AG04449 (cell line): ENCODE measurements at regions of chr19 and their contacts with region 1.

Region 1: GRCh38 chr19:262125-262524 is 29.1 kb downstream of the PLPP2 start:
- DNase-seq: no peak
- H3K4me3 ChIP-seq: no peak overlapping the region
- CTCF ChIP-seq: no peak

Region 2: GRCh38 chr19:277581-278165 is 15.5 kb after region 1 on chr19:
- CTCF ChIA-PET with region 1: interaction called, 49 read pairs
- POLR2A ChIA-PET with region 1: no interaction called
- DNase-seq: no peak
- H3K4me3 ChIP-seq: no peak overlapping the region
- CTCF ChIP-seq: no peak